Left colon (tissue), 2 donors: ENCODE measurements at regions of chr10 and their contacts with region 1.

Region 1: DNA sequence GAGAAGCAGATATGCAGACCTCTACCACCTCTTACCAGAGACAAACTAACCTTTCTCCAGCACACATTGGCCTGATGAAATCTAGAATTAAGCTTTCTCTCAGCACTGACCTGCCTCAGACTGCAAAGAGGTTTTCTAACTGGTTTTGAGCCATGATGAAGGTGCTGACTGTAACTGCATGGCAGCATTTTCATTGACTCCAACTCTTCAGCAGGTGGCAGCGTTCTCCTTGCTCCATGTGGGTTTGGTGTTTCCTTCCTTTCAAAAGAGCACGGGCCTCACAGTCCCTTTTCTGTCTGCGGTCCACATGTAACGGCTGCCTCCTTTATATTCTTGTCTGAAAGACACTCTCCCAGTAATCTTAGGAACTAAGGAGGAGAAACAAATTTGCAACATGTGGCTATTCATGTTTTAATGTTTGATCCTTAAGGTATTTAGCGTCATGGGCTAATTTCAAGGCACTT is 12.6 kb downstream of the KLLN start:
- DNase-seq: peak; percentile 42 to 58
- ATAC-seq: peak; percentile 97

Region 2: DNA sequence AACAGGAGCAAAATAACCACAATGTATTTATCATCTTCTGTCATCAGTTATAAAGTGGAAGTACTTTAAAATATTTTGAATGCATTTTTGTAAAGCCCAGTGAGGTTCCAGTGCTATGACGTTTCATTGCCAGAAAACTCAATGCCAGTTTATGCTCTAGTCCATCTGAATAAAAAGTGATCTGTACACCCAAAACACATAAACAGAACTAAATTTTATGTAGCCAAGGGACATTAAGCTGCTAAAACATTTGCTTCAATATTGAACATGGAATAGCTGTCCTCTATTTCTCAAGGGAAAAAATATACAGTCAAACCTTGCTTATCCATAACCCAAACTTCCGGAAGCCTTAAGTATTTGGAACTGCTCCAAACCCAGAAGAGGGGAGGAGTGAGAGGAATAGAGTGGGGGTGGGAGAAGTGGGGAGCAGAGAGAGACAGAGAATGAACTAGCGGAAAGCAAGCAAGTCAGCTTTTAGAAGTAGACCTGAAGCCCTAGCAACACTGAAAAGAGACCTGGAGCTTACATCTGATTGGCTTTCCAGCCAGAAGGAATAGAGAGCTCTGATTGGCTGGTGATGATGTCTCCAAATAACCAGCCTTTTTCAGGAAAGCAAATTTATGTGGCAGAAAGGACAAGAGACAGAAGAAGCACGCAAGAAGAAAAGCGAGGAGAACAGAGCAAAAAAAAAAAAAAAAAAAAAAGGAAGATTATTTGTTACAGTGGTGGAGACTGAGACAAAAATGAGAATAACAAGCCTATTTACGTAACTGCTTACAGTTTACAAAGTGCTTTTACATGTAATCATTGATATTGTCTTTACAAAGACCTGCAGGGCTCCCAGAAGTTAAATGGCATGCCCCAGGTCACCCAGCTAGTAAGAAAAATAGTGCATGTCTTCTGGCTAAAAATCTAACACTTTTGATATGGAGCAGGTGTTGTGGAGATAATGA is 536.3 kb after region 1 on chr10:
- intact Hi-C with region 1: loop called in 1 of 2 experiments (anchors 5 kb)
- DNase-seq: peak in 1 of 2 donors; percentile 49
- ATAC-seq: peak; percentile 55

Region 3: GRCh38 chr10:88553116-88553752 is 702.5 kb after region 1 on chr10:
- intact Hi-C with region 1: loop called in 1 of 2 experiments (anchors 10 kb)
- DNase-seq: peak; percentile 33 to 34
- ATAC-seq: peak; percentile 96